Sciatic nerve (tissue), 2 donors: ENCODE measurements at regions of chr2 and their contacts with region 1.

Region 1: DNA sequence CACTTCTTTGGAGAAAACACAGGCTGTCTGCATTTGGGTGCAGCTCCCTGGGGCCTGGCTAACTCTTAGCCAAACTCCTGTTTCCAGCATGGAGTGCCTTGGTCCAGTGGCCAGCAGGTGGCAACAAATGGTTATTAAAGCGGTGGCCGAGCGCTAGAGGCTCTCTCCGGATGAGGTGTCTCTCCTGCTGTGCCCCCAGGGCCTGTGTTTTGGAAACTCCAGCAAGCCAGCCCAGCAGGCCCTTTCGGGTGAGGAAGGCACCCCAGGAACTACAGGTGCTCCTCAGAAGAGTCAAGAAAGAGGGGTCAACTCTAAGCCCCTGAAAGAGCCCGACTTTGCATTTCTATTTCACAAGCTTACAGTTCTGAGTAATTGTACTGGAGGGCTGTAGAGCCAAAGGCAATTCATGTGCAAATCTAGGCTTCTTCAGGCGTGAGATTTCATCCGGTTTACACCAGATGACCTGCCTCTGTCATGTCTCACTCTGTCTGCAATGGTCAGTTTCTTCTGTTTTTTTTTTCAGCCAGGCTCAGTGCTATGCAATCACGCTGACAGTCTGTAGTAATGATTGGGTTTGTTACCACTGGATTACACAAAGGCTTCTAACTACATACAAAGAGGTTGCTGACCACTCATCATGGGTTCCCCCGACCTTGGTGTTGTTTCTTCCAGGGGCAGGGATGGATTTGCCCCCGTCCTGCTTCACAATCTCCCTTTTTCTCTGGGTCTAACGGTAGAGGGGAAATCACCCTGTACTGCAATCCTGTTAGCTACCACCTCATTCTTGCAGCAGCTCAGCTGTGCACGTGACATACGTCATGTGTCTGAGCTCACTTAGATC is 7.6 kb upstream of the CHRNA1 start:
- DNase-seq: peak; percentile 91
- ATAC-seq: peak; percentile 96

Region 2: DNA sequence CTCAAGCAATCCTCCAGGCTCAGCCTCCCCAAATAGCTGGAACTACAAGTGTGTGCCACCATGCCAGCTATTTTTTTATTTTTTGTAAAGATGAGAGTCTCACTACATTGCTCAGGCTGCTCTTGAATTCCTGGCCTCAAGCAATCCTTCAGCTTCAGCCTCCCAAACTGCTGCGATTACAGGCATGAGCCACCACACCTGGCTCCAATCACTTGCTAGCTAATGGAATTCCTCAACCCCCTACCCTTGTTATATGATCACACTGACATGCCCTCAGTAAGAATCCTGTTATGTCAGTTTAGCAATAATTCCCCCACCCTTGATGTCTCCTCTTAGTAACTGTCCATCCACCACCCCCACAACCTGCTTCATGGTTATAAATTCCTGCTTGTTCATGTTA is 221.0 kb after region 1 on chr2:
- intact Hi-C with region 1: loop called (anchors 5 kb)
- DNase-seq: no peak
- ATAC-seq: no peak